ENCODE measurements at regions of chr3 and their contacts with region 1.

Region 1: DNA sequence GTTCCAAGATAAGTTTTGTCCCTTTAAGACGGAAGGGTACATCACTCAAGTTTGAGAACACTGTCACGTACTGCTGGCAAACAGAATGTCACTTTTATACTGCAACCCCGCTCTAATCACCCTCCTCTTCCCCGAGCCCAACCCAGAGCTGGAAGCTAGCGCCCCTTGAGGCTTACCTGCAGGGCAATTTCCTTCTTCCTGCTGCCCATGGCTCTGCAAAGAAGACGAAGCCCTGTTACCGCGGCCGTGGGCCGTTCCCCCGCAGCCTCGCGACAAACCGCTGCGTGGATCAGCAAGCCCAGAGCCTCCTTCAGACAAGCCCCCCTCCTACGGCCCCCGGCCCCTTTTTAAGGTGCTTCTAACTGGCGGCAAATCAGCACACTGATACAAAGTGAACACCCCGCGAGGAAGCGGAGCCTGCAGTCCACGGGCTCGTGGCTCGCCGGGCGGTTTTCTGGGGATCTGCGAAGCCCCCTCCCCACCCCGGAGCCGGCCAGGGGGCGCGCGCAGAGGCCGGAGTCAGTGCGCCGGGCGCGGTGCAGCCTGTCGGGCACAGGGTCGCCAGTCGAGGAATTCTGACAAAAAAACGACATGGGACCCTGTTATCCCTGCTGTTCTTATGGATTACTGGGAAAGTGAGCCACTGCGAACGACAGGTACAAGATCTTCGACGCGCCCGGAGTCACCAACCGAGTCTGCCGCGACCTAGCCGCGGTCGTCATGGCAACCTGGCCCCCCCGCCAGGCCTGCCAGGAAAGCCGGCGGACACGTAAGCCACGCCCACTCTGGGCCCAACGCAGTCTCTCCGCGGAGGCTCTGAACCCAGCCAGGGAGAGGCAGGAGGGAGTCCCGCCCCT is at the start of gene NME9:
- DNase-seq: peak; percentile 76
- H3K4me3 Mint-ChIP-seq: peak within 1 kb of the TSS; percentile 69
- H3K27ac Mint-ChIP-seq: peak within 1 kb of the TSS; percentile 13
- H3K4me1 Mint-ChIP-seq: peaks cover 8% of the 10 kb centered on the region
- H3K27me3 Mint-ChIP-seq: no peaks in the 10 kb centered on the region
- CTCF ChIP-seq: peak; percentile 37
- total RNA-seq, gene NME9: not detected in 2 replicates

Region 2: GRCh38 chr3:138180375-138181029 is 148.9 kb before region 1 on chr3:
- CTCF ChIA-PET with region 1: interaction called, 6 read pairs
- POLR2A ChIA-PET with region 1: no interaction called
- intact Hi-C with region 1: loop called (anchors 1 kb)
- DNase-seq: peak; percentile 61
- H3K4me3 Mint-ChIP-seq: no peak overlapping the region
- H3K27ac Mint-ChIP-seq: no peak overlapping the region
- H3K4me1 Mint-ChIP-seq: no peaks in the 10 kb centered on the region
- H3K27me3 Mint-ChIP-seq: peaks cover 11% of the 10 kb centered on the region
- CTCF ChIP-seq: peak; percentile 48

Region 3: DNA sequence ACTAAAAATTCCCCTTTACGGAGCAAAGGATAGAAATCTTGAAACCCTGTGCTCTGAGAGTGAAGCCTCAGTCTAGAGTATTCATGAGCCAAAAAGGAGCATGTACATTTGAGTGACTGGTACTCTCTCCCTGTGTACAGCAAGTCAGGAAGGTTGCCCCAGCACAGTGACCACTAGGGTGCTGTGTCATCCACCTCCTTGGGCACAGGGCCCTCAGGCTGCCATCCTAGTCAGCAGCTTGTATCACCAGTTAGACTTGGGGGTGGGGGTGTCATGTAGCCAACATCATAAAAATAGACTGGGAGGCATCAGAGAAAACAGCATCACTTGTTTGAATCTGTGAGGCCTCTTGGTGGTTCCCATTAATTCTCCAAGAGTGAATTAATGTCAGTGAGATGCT is 11.7 kb before region 1 on chr3:
- CTCF ChIA-PET with region 1: interaction called, 10 read pairs
- POLR2A ChIA-PET with region 1: no interaction called
- intact Hi-C with region 1: no loop called
- DNase-seq: no peak
- H3K4me3 Mint-ChIP-seq: no peak overlapping the region
- H3K27ac Mint-ChIP-seq: no peak overlapping the region
- H3K4me1 Mint-ChIP-seq: peaks cover 4% of the 10 kb centered on the region
- H3K27me3 Mint-ChIP-seq: no peaks in the 10 kb centered on the region
- CTCF ChIP-seq: no peak

Region 4: GRCh38 chr3:138349926-138350665 is 20.7 kb after region 1 on chr3:
- CTCF ChIA-PET with region 1: interaction called, 10 read pairs
- POLR2A ChIA-PET with region 1: interaction called, 4 read pairs
- intact Hi-C with region 1: no loop called
- DNase-seq: no peak
- H3K4me3 Mint-ChIP-seq: no peak overlapping the region
- H3K27ac Mint-ChIP-seq: no peak overlapping the region
- H3K4me1 Mint-ChIP-seq: peaks cover 5% of the 10 kb centered on the region
- H3K27me3 Mint-ChIP-seq: no peaks in the 10 kb centered on the region
- CTCF ChIP-seq: no peak

Region 5: GRCh38 chr3:138389841-138390586 is 60.7 kb after region 1 on chr3:
- CTCF ChIA-PET with region 1: interaction called, 11 read pairs
- POLR2A ChIA-PET with region 1: interaction called, 3 read pairs
- intact Hi-C with region 1: no loop called
- DNase-seq: peak; percentile 92
- H3K4me3 Mint-ChIP-seq: peak overlapping the region; percentile 26
- H3K27ac Mint-ChIP-seq: peak overlapping the region; percentile 7
- H3K4me1 Mint-ChIP-seq: peaks cover 14% of the 10 kb centered on the region
- H3K27me3 Mint-ChIP-seq: no peaks in the 10 kb centered on the region
- CTCF ChIP-seq: no peak

Region 6: DNA sequence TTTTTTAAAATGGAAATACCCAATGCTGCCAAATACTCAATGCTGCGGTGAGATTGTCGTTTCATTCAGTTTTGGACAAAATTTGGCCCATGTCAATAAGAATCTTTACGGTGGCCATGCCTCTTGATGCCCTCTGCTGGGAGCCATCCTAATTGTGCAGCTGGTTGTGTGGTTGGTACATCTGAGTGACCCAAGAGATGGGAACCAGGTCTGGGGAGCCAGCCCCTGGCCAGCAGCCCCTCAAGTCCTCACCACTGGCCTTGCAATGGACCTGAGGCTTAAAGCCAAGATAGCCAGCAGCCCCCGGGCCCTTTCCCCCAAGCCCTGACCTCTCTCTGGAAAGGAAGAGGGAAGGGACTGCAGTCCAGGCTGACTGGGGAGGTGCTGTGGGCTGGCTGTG is 68.6 kb after region 1 on chr3:
- CTCF ChIA-PET with region 1: interaction called, 5 read pairs
- POLR2A ChIA-PET with region 1: no interaction called
- intact Hi-C with region 1: loop called (anchors 1 kb)
- DNase-seq: peak; percentile 32
- H3K4me3 Mint-ChIP-seq: no peak overlapping the region
- H3K27ac Mint-ChIP-seq: no peak overlapping the region
- H3K4me1 Mint-ChIP-seq: no peaks in the 10 kb centered on the region
- H3K27me3 Mint-ChIP-seq: no peaks in the 10 kb centered on the region
- CTCF ChIP-seq: peak; percentile 36

Region 7: GRCh38 chr3:138935848-138936740 is 606.7 kb after region 1 on chr3:
- CTCF ChIA-PET with region 1: no interaction called
- POLR2A ChIA-PET with region 1: no interaction called
- intact Hi-C with region 1: loop called (anchors 5 kb)
- DNase-seq: peak; percentile 59
- H3K4me3 Mint-ChIP-seq: peak overlapping the region; percentile 68
- H3K27ac Mint-ChIP-seq: no peak overlapping the region
- H3K4me1 Mint-ChIP-seq: no peaks in the 10 kb centered on the region
- H3K27me3 Mint-ChIP-seq: peaks cover 16% of the 10 kb centered on the region
- CTCF ChIP-seq: peak; percentile 84